ENCODE measurements at regions of chr15 and their contacts with region 1.

Region 1: DNA sequence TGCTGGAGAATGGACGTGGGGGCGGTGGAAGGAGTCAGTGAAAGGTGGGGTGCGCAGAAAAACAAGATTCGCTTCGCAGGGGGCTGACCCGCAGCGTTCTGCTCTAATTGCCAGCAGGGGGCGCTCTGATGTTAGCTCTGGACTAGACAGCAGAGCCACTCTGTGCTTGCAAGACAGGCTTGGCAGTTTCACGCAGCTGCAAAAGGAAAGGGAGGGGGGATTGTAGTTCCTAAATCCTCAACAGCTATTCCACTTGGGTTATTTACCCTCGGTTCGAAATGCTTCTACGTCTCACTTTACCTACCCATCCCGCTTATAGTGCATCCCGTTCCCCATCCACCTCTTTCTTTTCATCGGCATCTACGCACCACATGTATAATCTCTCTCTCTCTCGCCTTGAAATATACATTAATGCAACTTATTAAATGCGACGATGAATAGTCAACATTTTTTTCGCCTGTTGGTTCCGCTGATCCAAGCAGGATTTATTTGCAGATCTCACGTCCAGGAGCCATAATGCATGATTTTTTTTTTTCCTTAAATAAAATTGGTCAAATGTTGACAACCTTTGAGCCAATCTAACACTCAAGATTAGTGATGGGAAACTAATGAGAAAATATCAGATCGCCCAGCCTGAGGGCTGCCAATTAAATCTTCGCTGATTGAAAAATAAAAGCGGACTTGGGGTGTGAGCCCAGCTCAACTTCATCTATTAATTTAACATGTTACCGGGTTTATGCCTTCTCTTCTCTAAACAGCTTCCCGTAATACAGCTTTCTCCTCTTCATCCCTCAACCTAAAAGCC is 216.4 kb downstream of the MEIS2 start:
- DNase-seq: peak; percentile 72 to 98 (median 88)

Region 2: DNA sequence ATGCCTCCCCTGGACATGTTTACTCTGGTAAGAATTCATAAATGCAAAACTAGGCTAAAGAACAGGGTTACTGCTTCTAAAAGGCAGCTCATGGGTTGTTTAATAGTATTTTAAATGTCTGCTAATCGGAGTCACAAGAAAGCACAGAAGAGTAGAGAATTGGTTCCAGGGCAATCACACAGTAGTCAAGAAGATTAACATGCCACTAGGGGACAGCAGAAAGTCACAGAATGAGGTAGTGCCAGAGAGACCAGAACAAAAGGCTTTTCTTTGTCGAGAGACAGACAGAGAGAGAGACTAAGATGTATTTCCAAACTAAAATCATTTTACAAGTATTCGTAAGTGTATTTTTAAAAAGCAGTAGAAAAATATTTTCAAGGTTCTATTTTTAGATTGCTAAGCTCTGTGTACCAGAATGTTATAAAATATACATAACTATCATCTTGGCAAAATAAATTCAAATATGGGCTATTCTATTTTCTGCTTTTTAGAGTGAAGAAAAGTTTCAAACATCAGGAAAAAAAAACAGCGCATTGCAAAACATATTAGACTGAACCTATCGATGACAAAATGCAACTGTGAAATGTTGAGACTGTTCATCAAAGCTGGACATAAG is 382.7 kb before region 1 on chr15:
- intact Hi-C with region 1: loop called (anchors 5 kb)
- DNase-seq: peak in 2 of 10 donors; percentile 15 to 30

Region 3: DNA sequence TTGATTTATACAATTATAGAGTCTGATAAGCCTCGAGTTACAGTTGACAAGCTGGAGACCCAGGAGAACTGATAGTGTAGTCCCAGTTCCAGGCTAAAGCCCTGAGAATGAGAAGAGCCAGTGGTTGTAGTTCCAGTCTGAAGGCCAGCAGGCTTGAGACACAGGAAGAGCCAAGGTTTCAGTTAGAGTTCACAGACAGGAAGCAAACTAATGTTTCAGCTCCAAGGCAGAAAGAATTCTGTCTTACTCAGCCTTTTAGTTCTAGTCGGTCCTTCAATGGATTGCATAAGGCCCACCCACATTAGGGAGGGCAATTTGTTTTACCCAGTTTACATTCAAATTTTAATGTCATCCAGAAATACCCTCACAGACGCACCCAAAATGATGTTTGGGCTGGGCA is 201.8 kb before region 1 on chr15:
- intact Hi-C with region 1: no loop called
- DNase-seq: no peak

Region 4: DNA sequence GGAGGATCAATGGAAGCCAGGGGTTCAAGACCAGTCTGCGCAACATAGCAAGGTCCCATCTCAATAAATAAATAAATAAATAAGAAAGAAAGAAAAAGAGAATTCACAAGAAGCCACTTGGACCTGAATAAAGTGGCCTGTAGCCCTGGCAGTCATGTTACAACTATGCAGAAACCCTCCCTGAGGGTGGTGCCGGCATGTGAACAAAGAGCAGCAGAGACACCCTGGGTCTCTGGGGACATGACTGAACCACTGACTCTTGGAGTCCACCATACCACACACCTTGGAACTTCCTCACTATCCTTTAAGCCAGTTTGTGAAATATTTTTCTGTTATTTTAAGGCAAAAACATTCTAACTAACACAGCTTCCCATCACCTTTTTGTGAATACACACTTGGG is 123.4 kb after region 1 on chr15:
- intact Hi-C with region 1: no loop called
- DNase-seq: no peak

Region 5: DNA sequence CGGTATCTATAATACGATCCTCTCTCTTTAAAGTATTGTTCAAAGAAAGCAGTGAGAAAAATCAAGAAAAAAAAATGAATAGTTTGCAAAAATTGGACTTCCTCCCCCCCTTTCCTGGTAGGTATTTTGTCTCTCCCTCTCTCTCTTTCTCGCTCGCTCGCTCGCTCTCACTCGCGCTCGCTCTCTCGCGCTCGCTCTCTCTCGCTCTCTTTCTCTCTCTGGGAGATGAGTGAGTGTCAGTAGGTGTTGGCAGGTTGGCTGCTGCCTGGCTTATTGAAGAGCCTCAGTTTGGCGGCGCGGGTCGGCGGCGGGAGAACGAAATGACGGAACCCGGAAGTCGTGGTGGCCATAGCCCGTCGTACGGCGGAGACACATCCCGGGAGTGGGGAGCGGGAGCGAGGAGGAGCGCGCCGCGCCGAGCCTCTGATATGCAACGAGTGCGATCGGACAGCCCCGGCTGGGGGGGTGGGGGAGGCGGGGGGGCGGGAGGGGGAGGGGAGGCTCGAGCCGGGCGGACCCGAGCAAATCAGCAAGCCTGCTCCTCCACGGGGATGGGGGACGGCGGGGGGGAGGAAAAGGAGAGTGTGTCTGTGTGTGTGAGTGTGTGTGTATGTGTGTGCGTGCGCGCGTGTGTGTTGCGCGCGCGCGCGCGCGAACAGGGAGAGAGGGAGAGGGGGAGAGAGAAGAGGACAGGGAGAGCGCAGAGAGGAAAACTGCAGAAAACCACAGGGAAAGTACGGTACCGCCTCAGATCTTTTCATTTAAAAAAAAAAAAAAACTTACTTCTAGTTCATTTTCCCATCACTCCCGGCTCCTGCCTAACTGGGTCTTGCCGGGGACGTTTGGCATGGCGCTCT is 216.4 kb after region 1 on chr15 and contains the start of gene MEIS2:
- intact Hi-C with region 1: loop called (anchors 1 kb)
- DNase-seq: peak; percentile 77 to 98 (median 88)

Region 6: DNA sequence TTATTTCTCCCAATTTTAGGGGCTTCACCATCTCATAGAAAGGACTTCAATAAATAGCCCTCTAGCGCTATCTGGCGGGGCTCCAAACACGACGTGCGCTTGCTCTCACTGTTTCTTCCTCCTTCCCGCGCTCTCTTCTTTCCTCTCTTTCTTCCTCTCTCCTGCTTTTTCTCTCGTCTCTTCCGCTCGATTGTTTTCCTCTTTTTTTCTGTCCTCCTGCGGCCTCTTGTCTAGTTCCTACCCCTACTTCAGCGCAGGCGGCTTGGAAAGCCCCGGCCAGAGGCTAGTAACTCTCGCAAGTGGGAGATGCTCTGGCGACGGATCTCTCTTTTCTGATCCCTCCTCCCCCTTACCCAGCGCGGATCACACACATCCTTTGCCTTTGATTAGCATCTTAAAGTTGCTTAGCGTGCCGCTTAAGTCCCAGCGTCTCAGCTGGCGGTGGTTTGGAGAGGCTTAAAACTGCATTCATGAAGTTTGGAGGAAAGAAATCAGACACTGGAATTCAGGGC is 222.6 kb after region 1 on chr15:
- intact Hi-C with region 1: loop called (anchors 1 kb)
- DNase-seq: peak in 6 of 10 donors; percentile 45 to 91 (median 67)

Region 7: GRCh38 chr15:37134699-37135131 is 250.8 kb after region 1 on chr15:
- intact Hi-C with region 1: loop called (anchors 2 kb)
- DNase-seq: no peak